Dorsolateral prefrontal cortex (tissue), 120 donors: ENCODE measurements at regions of chr1 and their contacts with region 1.

Region 1: DNA sequence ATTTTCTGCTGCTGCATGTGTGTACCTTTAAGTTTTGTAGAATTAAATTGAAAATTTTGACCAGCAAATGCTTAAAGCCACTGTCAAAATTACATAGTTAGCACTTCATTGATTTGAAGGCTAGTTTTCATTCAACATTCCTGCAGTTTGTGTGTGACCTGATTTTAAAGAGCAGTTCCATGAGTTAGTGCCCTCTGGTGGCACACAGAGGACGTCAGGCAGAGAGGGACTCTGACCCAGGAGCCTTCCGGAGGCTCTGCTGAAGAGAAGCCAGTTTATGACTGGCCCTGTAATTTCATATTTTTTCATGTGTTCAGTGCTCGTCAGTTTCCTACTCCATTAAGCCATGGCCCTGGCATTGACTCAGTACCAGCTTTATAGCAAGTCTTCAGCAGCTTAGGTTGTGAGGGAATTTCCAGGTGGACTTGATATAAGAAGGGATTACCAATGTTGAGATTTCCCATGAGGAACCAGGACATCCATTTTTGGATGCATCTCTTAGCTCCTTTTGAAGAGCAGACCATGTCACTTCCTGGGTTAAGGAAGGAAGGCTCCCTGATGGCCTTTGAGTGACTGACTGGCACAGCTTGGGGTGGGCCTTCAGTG is 104.7 kb downstream of the CAMTA1 start:
- DNase-seq: peak in 2 of 10 donors; percentile 40 to 54
- H3K4me3 ChIP-seq: no peak overlapping the region
- H3K27ac ChIP-seq: no peak overlapping the region
- H3K27me3 ChIP-seq: no peaks in the 10 kb centered on the region
- CTCF ChIP-seq: peak; percentile 51 to 89 (median 75)

Region 2: DNA sequence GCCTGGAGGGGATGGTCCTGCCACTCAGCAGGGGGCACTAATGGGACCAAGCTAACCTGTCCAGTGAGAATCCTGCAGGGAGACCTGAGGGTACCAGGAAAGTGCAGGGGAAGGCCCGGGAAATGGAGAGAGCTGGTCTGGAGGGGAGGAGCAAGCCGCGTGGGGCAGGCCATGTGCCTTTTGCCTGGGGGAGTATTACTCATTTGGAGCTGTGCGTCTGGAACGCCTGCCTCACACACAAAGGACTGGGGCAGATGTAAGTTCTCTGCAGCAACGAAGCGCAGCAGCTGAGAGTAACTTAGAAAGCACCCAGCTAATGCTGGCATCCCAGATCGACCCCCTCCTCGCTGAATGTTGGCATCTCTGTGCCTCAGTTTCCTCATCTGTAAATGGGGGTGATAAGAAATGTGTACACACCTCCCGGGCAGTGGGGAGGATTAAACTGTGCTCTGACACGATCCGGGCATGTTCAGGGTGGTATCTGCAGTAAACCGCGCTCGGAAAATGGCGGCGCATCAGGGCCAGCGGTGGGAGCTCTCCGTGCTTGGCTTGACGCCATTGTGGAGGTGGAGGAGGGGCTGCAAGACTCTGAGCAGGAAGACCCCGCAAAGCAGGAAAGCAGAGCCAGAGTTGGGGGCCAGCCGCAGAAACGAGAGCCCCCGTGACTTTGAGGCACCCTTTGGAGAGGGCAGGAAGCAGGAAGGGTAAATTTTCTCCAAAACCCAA is 1110.2 kb before region 1 on chr1:
- intact Hi-C with region 1: no loop called
- DNase-seq: no peak
- H3K4me3 ChIP-seq: no peak overlapping the region
- H3K27ac ChIP-seq: no peak overlapping the region
- H3K27me3 ChIP-seq: peaks cover 0 to 4% (median 0%) of the 10 kb centered on the region in 45 donors
- CTCF ChIP-seq: no peak

Region 3: DNA sequence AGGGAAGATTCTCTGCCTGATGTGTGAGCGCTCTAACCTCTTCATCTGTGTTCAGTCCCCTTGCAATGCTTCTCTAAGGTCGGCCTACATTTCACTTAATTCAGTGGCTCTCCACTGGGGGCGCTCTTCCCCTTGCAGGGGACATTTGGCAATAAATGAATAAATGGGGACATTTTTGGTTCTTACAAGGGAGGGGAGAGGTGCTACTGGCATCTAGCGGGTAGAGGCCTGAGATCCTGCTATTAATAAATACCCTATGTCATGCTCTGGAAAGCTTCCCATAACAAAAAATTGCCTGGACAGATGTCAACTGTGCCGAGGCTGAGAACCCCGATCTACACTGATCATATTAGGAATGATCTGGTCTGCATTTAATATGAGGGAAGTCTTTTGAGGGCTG is 162.4 kb before region 1 on chr1:
- intact Hi-C with region 1: loop called in 1 of 2 experiments (anchors 5 kb)
- DNase-seq: peak in 1 of 10 donors; percentile 19
- H3K4me3 ChIP-seq: no peak overlapping the region
- H3K27ac ChIP-seq: no peak overlapping the region
- H3K27me3 ChIP-seq: no peaks in the 10 kb centered on the region
- CTCF ChIP-seq: peak; percentile 49 to 88 (median 74)

Region 4: DNA sequence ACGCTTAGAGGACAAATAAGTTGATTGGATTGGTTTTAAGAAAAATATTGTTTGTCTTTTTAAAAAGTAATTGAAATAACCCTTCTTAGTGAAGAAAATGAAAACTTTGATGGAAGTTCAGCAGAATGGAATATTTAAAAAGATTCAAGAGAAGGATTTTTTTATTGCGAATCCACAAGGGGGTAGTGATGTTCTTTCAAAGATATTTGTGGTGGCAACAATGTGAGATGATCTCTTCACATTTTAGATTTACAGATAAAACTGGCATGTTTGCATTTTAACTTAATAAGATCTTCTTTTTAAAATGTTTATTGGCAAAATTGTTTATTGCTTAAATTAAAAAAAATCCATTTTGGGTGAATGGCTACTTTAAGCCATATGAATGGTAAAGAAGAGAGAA is 95.8 kb before region 1 on chr1:
- intact Hi-C with region 1: loop called in 1 of 2 experiments (anchors 5 kb)
- DNase-seq: no peak
- H3K4me3 ChIP-seq: no peak overlapping the region
- H3K27ac ChIP-seq: no peak overlapping the region
- H3K27me3 ChIP-seq: no peaks in the 10 kb centered on the region
- CTCF ChIP-seq: peak in 55 of 56 donors; percentile 47 to 83 (median 65)

Region 5: GRCh38 chr1:6801966-6802365 is 88.0 kb before region 1 on chr1:
- intact Hi-C with region 1: loop called (anchors 5 kb)
- DNase-seq: no peak
- H3K4me3 ChIP-seq: no peak overlapping the region
- H3K27ac ChIP-seq: peak overlapping the region in 3 of 59 donors; percentile 7 to 31 (median 25)
- H3K27me3 ChIP-seq: no peaks in the 10 kb centered on the region
- CTCF ChIP-seq: no peak

Region 6: DNA sequence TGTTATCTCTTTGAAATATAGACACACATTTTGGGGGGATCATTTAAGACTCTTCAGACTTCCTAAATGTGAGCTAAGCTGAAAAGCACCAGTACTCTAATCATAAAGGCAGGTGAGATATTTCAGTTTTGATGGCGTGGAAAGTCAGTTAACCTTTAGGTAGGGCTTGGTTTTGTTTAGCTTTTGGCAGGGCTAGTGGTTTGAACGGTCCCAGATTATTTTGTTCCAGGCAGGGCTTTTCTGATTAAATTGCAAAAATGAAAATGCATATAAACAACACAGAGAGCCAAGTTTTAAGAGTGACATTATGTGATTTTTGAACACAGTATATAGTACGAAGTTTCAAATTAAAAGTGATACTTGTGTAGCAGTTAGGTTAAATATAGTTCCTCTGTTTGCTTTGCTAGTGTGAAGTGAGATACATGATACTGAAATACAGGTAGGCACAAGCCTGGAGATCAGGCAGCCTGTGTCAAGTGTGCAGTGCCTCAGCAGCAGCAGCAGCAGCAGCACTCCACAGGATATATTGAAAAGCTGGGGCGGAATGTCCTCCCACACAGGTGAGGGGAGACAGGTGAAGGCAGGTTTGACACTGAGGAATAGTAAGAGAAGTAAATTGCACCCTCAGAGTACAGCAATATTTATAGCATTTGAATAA is 57.3 kb before region 1 on chr1:
- intact Hi-C with region 1: no loop called
- DNase-seq: no peak
- H3K4me3 ChIP-seq: no peak overlapping the region
- H3K27ac ChIP-seq: peak overlapping the region in 3 of 59 donors; percentile 5 to 33 (median 19)
- H3K27me3 ChIP-seq: no peaks in the 10 kb centered on the region
- CTCF ChIP-seq: no peak